H1 (cell line): ENCODE measurements at regions of chr6 and their contacts with region 1.

Region 1: GRCh38 chr6:43702534-43703440 is 15.2 kb upstream of the MRPS18A start:
- DNase-seq: peak; percentile 90 to 91
- H3K4me3 ChIP-seq: peak overlapping the region in 3 of 4 experiments; percentile 7 to 48 (median 18); a peak in 4 of 8 replicates
- H3K27ac ChIP-seq: peak overlapping the region; percentile 79
- H3K4me1 ChIP-seq: peaks cover 24 to 38% (median 27%) of the 10 kb centered on the region in 4 experiments
- H3K27me3 ChIP-seq: no peaks in the 10 kb centered on the region
- CTCF ChIP-seq: no peak
- EP300 ChIP-seq: peak in 1 of 2 experiments; percentile 84; a peak in 1 of 3 replicates
- POLR2A ChIP-seq: peak in 1 of 2 experiments; percentile 83; a peak in 1 of 3 replicates
- RAD21 ChIP-seq: peak in 1 of 2 experiments; percentile 14; a peak in 2 of 4 replicates

Region 2: DNA sequence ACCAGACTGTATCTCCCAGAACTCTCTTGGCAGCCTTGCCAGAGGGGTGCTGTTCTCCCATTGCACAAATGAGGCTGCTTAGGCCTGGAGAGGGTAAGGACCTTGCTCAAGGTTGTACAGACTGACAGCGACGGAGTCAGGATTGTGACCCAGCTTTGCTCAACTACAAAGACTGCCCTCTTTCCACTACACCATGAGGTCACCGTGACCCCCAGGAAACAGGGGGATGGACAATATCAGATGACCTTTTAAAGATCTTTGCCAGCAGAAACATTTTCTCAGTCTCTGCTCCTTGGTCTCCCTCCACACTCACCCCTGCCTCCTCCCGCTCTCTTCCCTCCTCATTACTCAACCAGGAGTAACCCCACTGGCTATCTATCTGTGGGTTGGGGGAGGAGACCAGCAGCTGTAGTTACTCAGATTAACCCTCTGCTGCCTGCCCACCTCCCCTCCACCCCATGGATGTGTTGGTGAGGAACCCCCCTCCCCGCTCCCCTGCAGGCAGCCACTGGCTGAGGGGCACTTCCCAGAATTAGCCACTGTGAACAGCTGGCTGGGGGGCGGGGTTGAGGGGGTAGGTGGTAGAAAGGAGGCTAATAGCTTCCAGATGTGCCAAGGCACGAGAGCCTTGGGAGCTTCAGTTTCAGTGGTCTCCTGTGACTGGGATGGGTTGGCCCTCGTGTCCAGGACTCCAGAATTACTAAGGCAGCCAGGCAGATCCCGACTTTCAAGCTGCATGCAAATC is 11.7 kb after region 1 on chr6:
- CTCF ChIA-PET with region 1: interaction called, 4 read pairs
- POLR2A ChIA-PET with region 1: interaction called, 17 read pairs
- DNase-seq: no peak
- H3K4me3 ChIP-seq: no peak overlapping the region
- H3K27ac ChIP-seq: no peak overlapping the region
- H3K4me1 ChIP-seq: peaks cover 0 to 10% (median 5%) of the 10 kb centered on the region in 4 experiments; a peak in 5 of 7 replicates
- H3K27me3 ChIP-seq: no peaks in the 10 kb centered on the region
- CTCF ChIP-seq: no peak
- EP300 ChIP-seq: no peak
- POLR2A ChIP-seq: no peak
- RAD21 ChIP-seq: no peak

Region 3: DNA sequence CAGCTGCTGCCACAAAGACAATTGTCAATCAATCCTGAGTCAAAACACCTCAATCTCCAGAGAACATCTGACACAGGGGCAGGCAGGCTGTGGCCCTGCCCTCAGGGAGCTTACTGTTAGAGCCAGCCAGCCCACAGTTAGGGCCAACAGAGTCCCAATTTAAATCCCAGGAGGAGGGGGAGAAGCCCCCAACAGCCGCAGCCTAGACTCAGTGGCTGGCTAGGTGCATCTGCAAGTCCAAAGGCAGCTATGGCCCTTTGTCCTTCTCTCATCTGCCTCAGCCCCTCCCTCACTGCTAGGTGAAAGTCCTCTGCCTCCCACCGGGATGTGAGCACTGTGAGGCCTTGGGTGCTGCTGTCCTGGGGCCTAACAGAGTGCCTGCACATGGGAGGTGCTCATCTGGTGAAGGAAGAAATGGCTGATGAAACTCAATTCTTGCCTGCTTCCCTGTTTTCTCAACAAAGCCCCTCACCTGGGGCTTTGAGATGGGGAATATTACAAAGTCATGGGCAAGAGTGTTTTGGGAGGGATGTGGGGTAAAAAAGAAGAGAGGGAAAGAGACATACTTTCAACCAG is 33.5 kb after region 1 on chr6:
- CTCF ChIA-PET with region 1: no interaction called
- POLR2A ChIA-PET with region 1: no interaction called
- DNase-seq: no peak
- H3K4me3 ChIP-seq: no peak overlapping the region
- H3K27ac ChIP-seq: no peak overlapping the region
- H3K4me1 ChIP-seq: peaks cover 0 to 19% (median under 1%) of the 10 kb centered on the region in 4 experiments; a peak in 3 of 7 replicates
- H3K27me3 ChIP-seq: no peaks in the 10 kb centered on the region
- CTCF ChIP-seq: no peak
- EP300 ChIP-seq: no peak
- POLR2A ChIP-seq: no peak
- RAD21 ChIP-seq: no peak